CD8-positive, alpha-beta T cell (primary cell): ENCODE measurements at regions of chr1 and their contacts with region 1.

Region 1: DNA sequence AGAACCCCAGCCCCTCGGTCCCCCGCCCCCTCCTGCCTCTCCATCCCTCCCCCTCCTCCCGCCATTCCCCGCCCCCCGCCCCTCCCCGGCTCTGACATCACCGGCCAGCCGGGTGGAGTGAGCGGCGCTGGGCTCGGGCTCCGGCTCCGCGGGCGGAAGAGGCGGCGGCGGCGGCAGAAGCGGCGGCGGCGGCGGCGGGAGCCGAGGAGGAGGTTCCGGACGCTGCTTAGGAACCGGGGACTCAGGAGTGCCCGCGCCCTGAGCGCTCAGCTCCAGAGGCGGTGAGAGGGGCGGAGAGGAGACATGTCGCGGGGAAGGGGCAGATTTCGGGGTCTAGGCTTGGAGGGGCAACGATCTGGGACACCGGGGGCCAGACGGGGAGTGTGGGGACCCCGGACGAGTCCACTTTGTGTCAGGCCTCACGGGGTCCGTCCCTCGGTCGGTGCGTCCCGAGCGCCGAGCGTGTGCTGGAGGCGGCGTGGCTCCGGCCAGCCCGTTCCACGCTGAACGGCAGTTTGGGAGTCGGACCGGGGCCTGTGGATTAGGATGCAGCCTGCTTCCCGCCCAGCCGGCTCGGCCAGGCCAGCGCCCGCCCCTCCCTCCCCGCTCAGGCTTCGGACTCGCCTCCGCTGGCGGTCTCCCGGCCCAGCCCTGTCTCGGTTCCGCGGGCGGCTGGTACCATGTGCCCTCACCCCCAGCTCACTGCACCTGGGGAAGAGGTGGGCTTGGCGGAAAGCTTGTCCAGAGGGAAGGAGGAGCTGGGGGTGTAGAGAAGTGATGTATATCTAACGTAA is at the start of gene PEA15:
- DNase-seq: peak; percentile 19 to 80 (median 66)
- ATAC-seq: peak; percentile 70
- H3K4me3 ChIP-seq: peak within 1 kb of the TSS; percentile 69 to 89
- H3K4me3 Mint-ChIP-seq: peak within 1 kb of the TSS; percentile 90
- H3K27ac ChIP-seq: peak within 1 kb of the TSS; percentile 57 to 83
- H3K27ac Mint-ChIP-seq: peak within 1 kb of the TSS; percentile 89
- H3K4me1 ChIP-seq: peaks cover 19% of the 10 kb centered on the region
- H3K4me1 Mint-ChIP-seq: peaks cover 36% of the 10 kb centered on the region
- H3K27me3 ChIP-seq: no peaks in the 10 kb centered on the region
- H3K27me3 Mint-ChIP-seq: no peaks in the 10 kb centered on the region
- CTCF ChIP-seq: no peak
- total RNA-seq, gene PEA15: 9.1 to 10.9 TPM

Region 2: DNA sequence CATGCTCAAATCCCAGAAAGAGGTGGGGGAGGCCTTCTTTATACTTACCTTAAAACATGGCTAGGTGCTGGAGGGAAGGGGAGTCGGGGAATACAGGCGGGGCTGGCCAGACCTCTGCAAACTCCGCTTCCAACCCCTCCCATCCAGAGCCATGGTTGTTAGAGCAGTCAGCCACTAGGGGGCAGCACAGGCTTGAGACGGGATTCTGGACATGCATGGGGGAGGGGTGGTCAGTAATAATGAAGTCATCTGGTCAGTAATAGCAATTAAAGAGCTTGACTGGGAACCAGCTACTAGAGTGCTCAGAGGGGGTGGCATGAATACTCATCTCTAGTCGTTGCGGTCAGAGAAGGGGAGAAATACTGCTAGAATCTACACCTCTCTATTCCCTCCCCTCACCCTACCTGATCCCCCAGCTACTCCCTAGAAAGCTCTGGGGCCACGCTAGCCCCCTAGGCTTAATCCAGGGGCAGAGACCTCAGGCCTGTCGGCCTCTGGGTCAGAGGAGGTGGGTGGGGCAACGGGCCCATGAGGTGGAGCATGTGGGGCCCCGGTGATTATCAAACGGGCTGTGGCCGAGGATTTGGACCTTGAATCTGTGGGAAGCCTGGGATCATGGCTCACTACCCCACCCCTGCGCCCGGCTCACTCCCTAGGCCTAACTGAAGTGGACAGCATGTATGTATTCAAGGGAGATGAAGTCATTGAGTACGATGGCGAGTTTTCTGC is 12.2 kb before region 1 on chr1:
- CTCF ChIA-PET with region 1: interaction called, 40 read pairs
- POLR2A ChIA-PET with region 1: no interaction called
- intact Hi-C with region 1: no loop called
- DNase-seq: peak; percentile 58 to 89 (median 81)
- ATAC-seq: peak; percentile 95
- H3K4me3 ChIP-seq: no peak overlapping the region
- H3K4me3 Mint-ChIP-seq: no peak overlapping the region
- H3K27ac ChIP-seq: no peak overlapping the region
- H3K27ac Mint-ChIP-seq: no peak overlapping the region
- H3K4me1 ChIP-seq: no peaks in the 10 kb centered on the region
- H3K4me1 Mint-ChIP-seq: no peaks in the 10 kb centered on the region
- H3K27me3 ChIP-seq: peaks cover 0 to 2% of the 10 kb centered on the region in 2 experiments
- H3K27me3 Mint-ChIP-seq: no peaks in the 10 kb centered on the region
- CTCF ChIP-seq: peak; percentile 83

Region 3: DNA sequence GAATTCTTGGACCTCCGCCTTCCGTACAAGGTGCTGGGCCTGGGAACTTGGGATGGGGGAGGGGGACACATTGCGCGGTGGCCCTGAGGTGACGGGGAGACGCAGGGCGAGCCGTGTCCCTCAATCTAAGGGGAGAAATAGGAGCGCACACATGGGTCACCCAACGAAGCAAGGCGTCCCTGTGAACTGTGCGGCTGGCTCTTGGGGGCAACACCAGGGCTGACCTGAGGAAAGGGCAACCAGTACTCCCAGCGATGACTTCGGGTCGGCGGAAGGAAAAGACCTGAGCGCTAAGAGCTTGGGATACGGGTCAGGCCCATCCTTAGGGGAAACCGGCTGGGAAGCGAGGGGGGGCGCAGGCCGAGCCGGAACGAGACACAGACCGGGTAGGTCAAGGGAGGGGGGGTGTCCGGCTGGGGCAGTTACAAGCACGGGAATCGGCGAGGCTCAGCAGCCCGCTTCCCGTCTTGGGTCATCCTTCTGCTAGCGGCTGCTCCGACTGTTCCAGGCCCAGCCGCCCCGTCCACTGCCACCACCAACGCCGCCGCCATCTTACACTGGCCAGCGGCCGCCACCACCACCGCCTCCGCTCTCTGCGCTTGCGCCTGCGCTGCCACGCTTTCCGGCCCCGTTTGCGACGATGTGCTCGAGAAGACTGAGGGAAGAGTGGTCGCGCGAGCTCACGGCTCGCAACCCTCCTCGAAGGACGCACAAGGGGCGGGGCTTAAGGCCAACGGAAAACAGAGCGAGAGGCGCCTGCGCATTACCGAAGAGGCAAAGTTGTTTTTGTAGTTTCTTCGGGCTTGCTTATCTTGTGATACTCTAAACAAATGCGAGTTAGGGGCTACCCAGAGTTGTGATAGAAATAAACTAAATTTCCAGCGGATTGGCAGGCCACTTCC is 56.7 kb after region 1 on chr1 and contains the start of gene DCAF8:
- CTCF ChIA-PET with region 1: no interaction called
- POLR2A ChIA-PET with region 1: interaction called, 3 read pairs
- intact Hi-C with region 1: loop called (anchors 5 kb)
- DNase-seq: peak; percentile 97 to 99 (median 98)
- ATAC-seq: peak; percentile 87
- H3K4me3 ChIP-seq: peak within 1 kb of the TSS; percentile 91 to 99
- H3K4me3 Mint-ChIP-seq: peak within 1 kb of the TSS; percentile 96
- H3K27ac ChIP-seq: peak within 1 kb of the TSS; percentile 83 to 99
- H3K27ac Mint-ChIP-seq: peak within 1 kb of the TSS; percentile 98
- H3K4me1 ChIP-seq: peaks cover 31% of the 10 kb centered on the region
- H3K4me1 Mint-ChIP-seq: peaks cover 41% of the 10 kb centered on the region
- H3K27me3 ChIP-seq: no peaks in the 10 kb centered on the region
- H3K27me3 Mint-ChIP-seq: no peaks in the 10 kb centered on the region
- CTCF ChIP-seq: no peak
- total RNA-seq, gene DCAF8: 152 to 162 TPM

Region 4: DNA sequence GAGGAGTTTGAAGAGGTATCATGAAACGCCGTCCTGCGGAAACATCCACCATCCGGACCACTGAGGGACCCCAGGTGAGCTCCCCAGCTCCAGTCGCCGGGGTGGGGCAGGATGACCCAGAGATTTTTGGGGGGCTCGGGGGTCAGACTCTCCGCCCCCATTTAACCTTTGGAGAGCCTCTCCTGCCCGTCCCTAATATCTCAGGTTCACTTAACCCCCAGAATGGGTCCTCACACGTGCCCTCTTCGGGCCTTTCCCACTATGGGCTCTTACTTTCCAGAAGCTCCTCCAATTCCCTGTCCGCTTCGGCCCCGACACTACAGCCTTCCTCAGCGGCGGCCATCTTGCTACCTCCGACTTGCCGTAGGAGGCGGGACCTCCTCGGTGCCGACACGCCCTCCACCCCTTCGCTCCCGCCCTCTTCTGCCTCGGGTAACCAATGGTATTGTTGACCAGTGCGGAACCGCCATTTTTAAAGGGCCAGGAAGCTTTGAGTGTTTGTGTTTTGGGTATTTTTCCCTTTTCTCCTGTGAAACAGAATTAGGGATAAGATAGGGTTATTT is 79.4 kb after region 1 on chr1 and contains the start of gene PEX19:
- CTCF ChIA-PET with region 1: no interaction called
- POLR2A ChIA-PET with region 1: interaction called, 3 read pairs
- intact Hi-C with region 1: loop called in 1 of 2 experiments (anchors 2 kb)
- DNase-seq: peak; percentile 87 to 96 (median 93)
- ATAC-seq: peak; percentile 100
- H3K4me3 ChIP-seq: peak within 1 kb of the TSS; percentile 73 to 89
- H3K4me3 Mint-ChIP-seq: peak within 1 kb of the TSS; percentile 94
- H3K27ac ChIP-seq: peak within 1 kb of the TSS; percentile 62 to 75
- H3K27ac Mint-ChIP-seq: peak within 1 kb of the TSS; percentile 91
- H3K4me1 ChIP-seq: peaks cover 22% of the 10 kb centered on the region
- H3K4me1 Mint-ChIP-seq: peaks cover 21% of the 10 kb centered on the region
- H3K27me3 ChIP-seq: no peaks in the 10 kb centered on the region
- H3K27me3 Mint-ChIP-seq: no peaks in the 10 kb centered on the region
- CTCF ChIP-seq: no peak
- total RNA-seq, gene PEX19: 36.0 to 37.4 TPM

Region 5: DNA sequence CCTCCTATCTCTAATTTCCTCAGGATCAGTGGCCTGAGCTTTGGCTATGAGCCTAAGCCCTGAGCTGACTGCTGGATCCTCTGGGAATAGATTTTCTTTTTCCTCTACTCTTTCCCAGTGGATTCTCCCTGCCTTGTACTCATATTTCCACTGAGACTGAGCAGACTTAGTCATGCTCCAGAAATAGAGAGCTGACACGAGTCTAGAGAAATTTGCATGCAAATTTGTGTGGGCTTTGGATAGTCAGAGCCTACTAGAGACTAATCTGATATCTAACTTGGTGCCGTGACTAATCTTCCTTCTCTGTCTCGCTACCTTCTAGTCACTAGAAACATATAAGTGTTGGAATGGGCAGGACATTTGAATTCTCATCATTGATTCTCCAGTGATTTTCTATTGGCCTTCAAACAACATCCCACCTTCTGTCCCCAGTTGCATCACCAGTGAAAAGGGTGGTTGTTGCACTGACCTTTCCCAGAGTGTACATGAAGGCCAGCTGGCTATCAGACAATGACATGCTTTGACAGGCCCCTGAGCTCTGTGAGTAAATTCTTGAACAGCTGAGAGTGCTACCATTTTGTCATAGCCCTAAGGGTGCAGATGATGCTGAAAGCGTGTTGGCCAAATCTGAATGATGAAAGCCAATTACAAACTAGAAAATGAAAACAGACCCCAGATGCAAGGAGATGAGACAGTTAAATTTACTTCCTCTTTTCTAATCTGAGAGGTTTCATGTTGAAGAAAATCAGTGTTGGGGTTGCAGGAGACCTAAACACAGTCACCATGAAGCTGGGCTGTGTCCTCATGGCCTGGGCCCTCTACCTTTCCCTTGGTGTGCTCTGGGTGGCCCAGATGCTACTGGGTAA is 1501.3 kb after region 1 on chr1 and contains the start of gene FCRLA:
- CTCF ChIA-PET with region 1: no interaction called
- POLR2A ChIA-PET with region 1: no interaction called
- intact Hi-C with region 1: no loop called
- DNase-seq: no peak
- ATAC-seq: no peak
- H3K4me3 ChIP-seq: no peak within 1 kb of the TSS
- H3K4me3 Mint-ChIP-seq: no peak within 1 kb of the TSS
- H3K27ac ChIP-seq: no peak within 1 kb of the TSS
- H3K27ac Mint-ChIP-seq: no peak within 1 kb of the TSS
- H3K4me1 ChIP-seq: no peaks in the 10 kb centered on the region
- H3K4me1 Mint-ChIP-seq: no peaks in the 10 kb centered on the region
- H3K27me3 ChIP-seq: no peaks in the 10 kb centered on the region
- H3K27me3 Mint-ChIP-seq: peaks cover 7% of the 10 kb centered on the region
- CTCF ChIP-seq: no peak
- total RNA-seq, gene FCRLA: not detected